A549 (cell line): ENCODE measurements at regions of chr15 and their contacts with region 1.

Region 1: GRCh38 chr15:71120425-71120944 is 5.2 kb downstream of the THSD4 start:
- DNase-seq: no peak
- ATAC-seq: no peak
- H3K4me3 ChIP-seq: no peak overlapping the region
- H3K27ac ChIP-seq: 0 out of 6 replicates have a peak overlapping the region, but pooled peaks of 1 of the 2 experiments have one; percentile 8
- H3K4me1 ChIP-seq: peaks cover 40% of the 10 kb centered on the region
- CTCF ChIP-seq: no peak
- EP300 ChIP-seq: no peak
- POLR2A ChIP-seq: no peak
- RAD21 ChIP-seq: no peak

Region 2: DNA sequence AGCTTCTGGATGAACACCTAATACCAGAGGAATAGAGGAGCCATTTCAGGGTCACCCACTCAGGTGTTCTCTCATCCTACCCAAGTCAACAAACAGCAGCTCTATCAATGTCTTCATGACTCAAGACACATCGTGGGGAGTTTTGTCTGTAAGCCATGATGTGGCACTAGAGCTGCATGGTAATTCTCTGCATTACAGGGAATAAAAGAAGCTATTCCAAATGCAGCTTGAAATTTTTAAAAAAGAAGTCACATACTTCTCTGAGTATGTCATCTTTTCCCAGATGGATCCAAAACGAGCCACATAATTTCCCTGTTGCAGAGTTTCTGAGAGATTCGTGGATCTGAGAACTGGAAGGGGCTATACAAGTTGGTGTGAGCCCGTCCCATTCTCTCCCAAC is 11.4 kb before region 1 on chr15:
- CTCF ChIA-PET with region 1: interaction called, 43 read pairs
- POLR2A ChIA-PET with region 1: no interaction called
- DNase-seq: no peak
- ATAC-seq: peak in 1 of 2 experiments; percentile 35; a peak in 2 of 6 replicates
- H3K4me3 ChIP-seq: no peak overlapping the region
- H3K27ac ChIP-seq: peak overlapping the region; percentile 0 to 9; a peak in 1 of 6 replicates
- H3K4me1 ChIP-seq: peaks cover 23% of the 10 kb centered on the region
- CTCF ChIP-seq: no peak
- EP300 ChIP-seq: no peak
- POLR2A ChIP-seq: no peak
- RAD21 ChIP-seq: peak; percentile 36 to 49; a peak in 4 of 5 replicates

Region 3: DNA sequence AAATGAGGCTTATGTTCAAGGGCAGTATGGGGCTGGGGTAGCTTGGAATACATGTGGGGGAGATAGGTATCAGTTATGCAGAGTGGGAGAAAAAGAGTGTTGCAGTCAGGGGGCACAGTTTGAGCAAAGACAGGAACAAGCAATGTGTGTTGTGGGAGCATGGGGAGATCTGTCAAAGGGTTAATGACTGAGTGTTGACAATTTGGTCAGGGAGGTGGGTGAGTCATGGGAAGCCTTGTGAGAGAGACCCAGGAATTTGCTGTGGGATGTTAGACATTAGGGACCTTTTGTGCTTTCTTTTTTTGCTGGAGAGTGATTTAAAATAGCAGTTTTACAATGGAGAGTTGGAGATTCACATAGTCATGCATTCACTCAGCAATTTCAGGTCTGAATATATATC is 468.3 kb after region 1 on chr15:
- CTCF ChIA-PET with region 1: no interaction called
- POLR2A ChIA-PET with region 1: no interaction called
- DNase-seq: peak; percentile 39 to 53
- ATAC-seq: peak; percentile 62 to 75; a peak in 4 of 6 replicates
- H3K4me3 ChIP-seq: no peak overlapping the region
- H3K27ac ChIP-seq: 0 out of 6 replicates have a peak overlapping the region, but pooled peaks of 1 of the 2 experiments have one; percentile 14
- H3K4me1 ChIP-seq: peaks cover 13% of the 10 kb centered on the region
- CTCF ChIP-seq: no peak
- EP300 ChIP-seq: no peak
- POLR2A ChIP-seq: no peak
- RAD21 ChIP-seq: no peak